Activated CD4-positive, alpha-beta memory T cell treated with anti-CD3 and anti-CD28 coated beads, Interleukin-2, amount 10 ng/mL, durations not matched to agents 7 days and 5 days (primary cell): ENCODE measurements at regions of chr12 and their contacts with region 1.

Region 1: DNA sequence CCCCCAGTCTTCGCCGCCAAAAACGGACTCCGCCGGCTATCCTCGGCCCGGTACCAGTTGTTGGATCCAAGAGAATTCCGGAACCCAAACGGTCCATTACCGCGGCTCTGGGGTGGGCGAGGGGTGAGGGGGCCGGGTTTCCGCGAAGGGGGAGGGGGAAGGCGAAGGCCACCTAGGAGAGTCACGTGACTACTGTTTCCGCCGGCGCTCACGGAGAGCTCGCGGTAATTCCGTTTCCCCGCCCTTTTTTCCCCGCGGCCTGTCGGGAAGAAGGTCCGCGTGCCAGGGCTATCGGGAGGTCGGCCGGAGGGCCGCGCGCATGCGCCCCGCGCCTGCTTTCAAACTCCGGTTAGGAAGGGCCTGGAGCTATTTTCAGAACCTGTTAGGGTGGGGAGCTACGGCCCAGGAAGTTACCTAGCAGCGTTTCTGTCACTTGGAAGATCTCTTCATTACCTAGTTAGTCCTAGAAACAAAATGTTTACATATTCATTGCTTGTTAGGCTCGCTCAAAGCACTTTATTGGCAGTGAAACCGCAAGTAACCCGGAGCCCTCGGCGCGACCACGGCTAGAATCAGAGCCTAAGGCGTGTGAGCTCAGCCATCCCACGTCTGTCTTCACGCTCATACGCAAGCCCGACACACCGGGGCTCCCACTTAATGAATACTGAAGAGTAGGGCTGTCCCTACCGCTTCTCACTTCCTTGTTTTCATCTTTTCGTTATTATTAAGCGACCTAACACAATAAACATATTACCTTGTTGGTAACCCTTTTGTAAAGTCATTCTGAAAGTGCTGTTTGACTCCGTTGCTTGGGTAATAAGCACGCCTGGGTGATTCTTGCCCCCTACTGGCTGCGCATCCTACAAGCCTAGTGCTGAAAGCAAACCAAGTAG is 624 bp upstream of the SBNO1 start:
- DNase-seq: peak; percentile 98
- H3K4me3 Mint-ChIP-seq: peak overlapping the region; percentile 82
- H3K27ac Mint-ChIP-seq: peak overlapping the region; percentile 96
- H3K4me1 Mint-ChIP-seq: peaks cover 18% of the 10 kb centered on the region
- H3K27me3 Mint-ChIP-seq: no peaks in the 10 kb centered on the region

Region 2: DNA sequence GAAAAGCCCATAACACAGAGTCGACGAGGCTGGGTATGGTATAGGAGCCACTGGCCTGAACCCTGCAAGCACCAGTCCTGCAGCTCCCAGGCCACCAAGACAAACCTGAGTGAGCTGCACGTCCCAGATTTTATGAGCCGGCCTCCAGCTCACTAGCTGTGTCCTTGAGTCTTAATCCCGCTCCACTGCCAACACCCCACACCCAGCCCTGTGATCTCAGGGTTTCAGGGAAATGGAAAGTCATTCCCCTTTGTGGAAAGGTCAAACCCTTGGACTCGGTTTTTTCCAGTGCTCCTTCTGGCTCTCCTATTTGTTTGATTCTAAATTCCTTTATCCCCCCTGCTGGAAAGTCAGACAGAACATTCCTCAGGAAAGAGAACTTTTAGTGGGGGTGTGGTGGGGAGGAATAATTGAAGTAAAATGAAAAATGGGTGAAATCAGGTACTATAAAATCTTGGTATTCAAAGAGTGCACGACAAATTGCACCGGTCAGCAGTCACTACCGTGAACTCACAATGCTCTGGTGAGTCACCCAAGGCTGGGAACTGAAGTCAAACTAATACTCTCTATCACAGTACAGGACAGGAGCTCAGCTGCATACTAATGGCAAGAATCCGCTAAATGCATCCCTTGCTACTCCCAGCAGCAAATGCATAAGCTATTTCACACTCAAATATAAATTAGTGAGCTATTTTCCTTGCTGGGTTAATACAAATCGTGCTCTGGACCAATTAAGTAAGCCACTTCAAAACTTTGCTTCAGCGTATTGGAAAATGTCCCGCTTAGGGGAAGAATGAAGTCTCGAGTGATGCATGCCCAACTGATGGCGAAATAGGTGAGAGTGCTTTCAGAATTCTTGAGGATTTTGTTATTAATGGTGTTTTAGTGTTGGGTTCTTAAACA is 223.4 kb before region 1 on chr12:
- CTCF ChIA-PET with region 1: no interaction called
- POLR2A ChIA-PET with region 1: no interaction called
- DNase-seq: no peak
- H3K4me3 Mint-ChIP-seq: no peak overlapping the region
- H3K27ac Mint-ChIP-seq: no peak overlapping the region
- H3K4me1 Mint-ChIP-seq: peaks cover 4% of the 10 kb centered on the region
- H3K27me3 Mint-ChIP-seq: no peaks in the 10 kb centered on the region

Region 3: DNA sequence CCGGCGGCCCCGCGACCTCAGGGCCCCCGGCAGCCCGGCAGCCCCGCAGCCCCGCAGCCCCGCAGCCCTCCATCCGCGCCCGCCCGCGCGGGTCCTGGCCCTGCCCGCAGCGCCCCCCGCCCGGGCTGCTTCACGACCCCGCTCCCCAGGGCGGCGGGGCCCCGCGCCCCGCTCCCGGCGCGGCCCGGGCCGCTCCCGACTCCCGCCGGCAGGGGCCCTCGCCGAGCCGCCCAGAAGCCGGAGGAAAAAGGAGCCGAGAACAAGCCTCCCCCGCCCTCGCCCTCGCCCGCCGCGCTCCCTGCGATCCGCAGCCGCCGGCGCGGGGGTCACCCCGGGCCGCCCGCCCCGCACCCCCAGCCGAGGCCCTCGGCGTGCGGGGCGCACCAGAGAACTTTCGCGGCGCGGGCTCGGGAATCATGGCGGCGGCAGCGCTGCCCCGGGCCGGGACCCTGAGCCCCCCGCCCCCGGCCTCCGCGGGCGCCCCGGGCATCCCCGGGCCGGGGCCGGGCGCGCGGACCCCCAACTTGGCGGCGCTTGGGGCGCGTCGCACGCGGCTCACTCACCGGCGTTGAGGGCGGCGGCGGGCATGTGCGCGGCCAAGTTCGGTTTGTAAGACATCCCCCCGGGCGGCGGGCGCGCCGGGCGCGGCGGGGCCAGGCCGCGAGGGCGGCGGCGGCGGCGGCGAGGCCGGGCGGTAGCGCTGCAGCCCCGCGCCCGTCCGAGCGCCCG is 94.1 kb before region 1 on chr12:
- CTCF ChIA-PET with region 1: interaction called, 4 read pairs
- POLR2A ChIA-PET with region 1: interaction called, 10 read pairs
- DNase-seq: peak; percentile 80
- H3K4me3 Mint-ChIP-seq: no peak overlapping the region
- H3K27ac Mint-ChIP-seq: no peak overlapping the region
- H3K4me1 Mint-ChIP-seq: peaks cover 20% of the 10 kb centered on the region
- H3K27me3 Mint-ChIP-seq: no peaks in the 10 kb centered on the region

Region 4: GRCh38 chr12:123351349-123351748 is 13.9 kb before region 1 on chr12:
- CTCF ChIA-PET with region 1: interaction called, 7 read pairs
- POLR2A ChIA-PET with region 1: interaction called, 10 read pairs
- DNase-seq: no peak
- H3K4me3 Mint-ChIP-seq: no peak overlapping the region
- H3K27ac Mint-ChIP-seq: no peak overlapping the region
- H3K4me1 Mint-ChIP-seq: peaks cover 32% of the 10 kb centered on the region
- H3K27me3 Mint-ChIP-seq: no peaks in the 10 kb centered on the region

Region 5: GRCh38 chr12:123382684-123383083 is 17.4 kb after region 1 on chr12:
- CTCF ChIA-PET with region 1: interaction called, 49 read pairs
- POLR2A ChIA-PET with region 1: interaction called, 107 read pairs
- DNase-seq: no peak
- H3K4me3 Mint-ChIP-seq: peak overlapping the region; percentile 47
- H3K27ac Mint-ChIP-seq: no peak overlapping the region
- H3K4me1 Mint-ChIP-seq: peaks cover 22% of the 10 kb centered on the region
- H3K27me3 Mint-ChIP-seq: no peaks in the 10 kb centered on the region